WTC11 (cell line): ENCODE measurements at regions of chr11 and their contacts with region 1.

Region 1: GRCh38 chr11:19259487-19260345 is 19.0 kb upstream of the E2F8 start:
- DNase-seq: peak; percentile 76
- ATAC-seq: peak; percentile 75
- H3K4me3 Mint-ChIP-seq: no peak overlapping the region
- H3K27ac Mint-ChIP-seq: no peak overlapping the region
- H3K4me1 Mint-ChIP-seq: peaks cover 21% of the 10 kb centered on the region
- H3K27me3 Mint-ChIP-seq: no peaks in the 10 kb centered on the region
- CTCF ChIP-seq: peak; percentile 92

Region 2: GRCh38 chr11:19218786-19219460 is 40.8 kb before region 1 on chr11:
- CTCF ChIA-PET with region 1: no interaction called
- POLR2A ChIA-PET with region 1: no interaction called
- DNase-seq: no peak
- ATAC-seq: no peak
- H3K4me3 Mint-ChIP-seq: no peak overlapping the region
- H3K27ac Mint-ChIP-seq: no peak overlapping the region
- H3K4me1 Mint-ChIP-seq: peaks cover 7% of the 10 kb centered on the region
- H3K27me3 Mint-ChIP-seq: no peaks in the 10 kb centered on the region
- CTCF ChIP-seq: no peak

Region 3: GRCh38 chr11:19244102-19244501 is 15.6 kb before region 1 on chr11:
- CTCF ChIA-PET with region 1: interaction called, 11 read pairs
- POLR2A ChIA-PET with region 1: no interaction called
- DNase-seq: no peak
- ATAC-seq: no peak
- H3K4me3 Mint-ChIP-seq: no peak overlapping the region
- H3K27ac Mint-ChIP-seq: no peak overlapping the region
- H3K4me1 Mint-ChIP-seq: peaks cover 9% of the 10 kb centered on the region
- H3K27me3 Mint-ChIP-seq: peaks cover 44% of the 10 kb centered on the region
- CTCF ChIP-seq: no peak